BJ (cell line): ENCODE measurements at regions of chr12 and their contacts with region 1.

Region 1: DNA sequence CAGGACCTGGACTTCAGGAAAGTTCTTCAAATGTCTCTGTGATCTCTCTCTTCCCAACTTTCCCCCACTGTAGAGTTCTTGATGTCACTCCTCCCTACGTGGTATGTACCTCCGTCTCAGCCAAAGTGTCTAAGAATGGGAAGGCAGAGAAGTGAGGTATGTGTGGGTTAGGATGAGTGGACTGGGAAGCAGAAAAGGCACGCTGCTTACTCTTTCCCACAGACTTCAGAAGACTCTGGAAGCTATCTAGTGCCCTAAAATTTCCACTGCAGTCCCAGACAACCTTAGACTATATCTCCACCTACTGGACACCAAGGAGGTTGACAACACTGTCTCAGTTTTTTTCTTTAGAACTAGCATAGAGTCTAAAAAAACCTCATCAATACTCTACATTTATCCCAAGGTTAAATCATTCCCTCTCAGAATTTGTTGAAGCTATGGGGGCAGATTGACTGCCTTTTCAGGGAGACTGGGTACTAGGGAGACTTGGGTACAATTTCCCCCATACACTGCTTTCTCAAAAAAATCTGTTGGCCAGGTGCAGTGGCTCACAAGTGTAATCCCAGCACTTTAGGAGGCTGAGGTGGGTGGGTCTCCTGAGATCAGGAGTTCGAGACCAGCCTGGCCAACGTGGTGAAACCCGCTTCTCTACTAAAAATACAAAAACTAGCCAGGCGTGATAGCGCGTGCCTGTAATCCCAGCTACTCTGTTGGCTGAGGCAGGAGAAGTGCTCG is 20.6 kb upstream of the ITGA5 start:
- DNase-seq: peak; percentile 27
- H3K4me3 ChIP-seq: no peak overlapping the region
- H3K27me3 ChIP-seq: peaks cover 4% of the 10 kb centered on the region; the same call in 1 of the 2 replicates
- CTCF ChIP-seq: peak; percentile 79

Region 2: GRCh38 chr12:54385241-54385914 is 54.3 kb before region 1 on chr12:
- CTCF ChIA-PET with region 1: interaction called, 42 read pairs
- POLR2A ChIA-PET with region 1: no interaction called
- DNase-seq: no peak
- H3K4me3 ChIP-seq: no peak overlapping the region
- H3K27me3 ChIP-seq: no peaks in the 10 kb centered on the region
- CTCF ChIP-seq: no peak

Region 3: GRCh38 chr12:54411391-54412241 is 28.1 kb before region 1 on chr12:
- CTCF ChIA-PET with region 1: interaction called, 643 read pairs
- POLR2A ChIA-PET with region 1: interaction called, 3 read pairs
- DNase-seq: peak; percentile 98
- H3K4me3 ChIP-seq: no peak overlapping the region
- H3K27me3 ChIP-seq: no peaks in the 10 kb centered on the region
- CTCF ChIP-seq: no peak

Region 4: DNA sequence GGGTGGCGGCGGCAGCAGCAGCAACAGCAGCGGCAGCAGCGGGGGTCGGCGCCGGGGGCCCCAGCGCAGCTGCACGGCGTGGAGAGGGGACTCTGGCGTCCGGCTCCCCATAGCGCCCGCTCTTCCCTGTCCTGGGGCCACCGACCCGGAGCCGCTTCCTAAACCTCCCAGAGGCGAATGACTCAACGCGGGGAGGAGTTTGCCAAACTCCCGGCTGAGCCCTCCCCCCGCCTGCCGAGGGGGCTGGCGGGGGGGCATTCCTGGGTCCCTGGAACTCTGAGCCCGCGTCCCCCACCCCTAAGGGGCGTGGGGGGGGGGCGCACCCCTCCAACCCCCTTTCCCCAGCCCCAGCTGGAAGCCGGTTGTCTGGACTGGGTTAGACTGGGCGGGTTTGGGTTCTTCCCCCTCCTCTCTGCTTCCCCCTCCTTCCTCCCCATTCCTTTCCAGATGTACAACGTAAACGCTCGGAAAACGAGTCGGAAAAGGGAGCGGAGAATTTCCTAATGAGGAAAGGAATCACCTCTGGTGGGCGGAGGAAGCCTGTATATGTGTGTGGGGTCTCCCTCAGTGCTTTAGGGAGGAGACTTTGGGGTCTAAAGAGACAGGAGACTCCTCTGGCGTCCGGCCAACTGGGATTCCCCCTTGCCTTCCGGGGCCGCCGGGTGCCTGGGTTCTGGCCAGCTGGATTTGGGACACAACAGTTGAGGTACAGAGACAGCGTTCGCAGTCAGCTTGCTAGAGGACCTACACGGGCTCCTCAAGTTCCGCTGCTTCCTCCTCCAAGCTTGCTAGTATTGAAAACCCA is 20.4 kb before region 1 on chr12 and contains the start of gene ITGA5:
- CTCF ChIA-PET with region 1: interaction called, 18 read pairs
- POLR2A ChIA-PET with region 1: no interaction called
- DNase-seq: no peak
- H3K4me3 ChIP-seq: peak within 1 kb of the TSS; percentile 95
- H3K27me3 ChIP-seq: no peaks in the 10 kb centered on the region
- CTCF ChIP-seq: no peak
- polyA plus RNA-seq, gene ITGA5: 170 and 375 TPM in 2 replicates

Region 5: GRCh38 chr12:54588110-54588889 is 148.6 kb after region 1 on chr12 and contains the start of gene PPP1R1A:
- CTCF ChIA-PET with region 1: no interaction called
- POLR2A ChIA-PET with region 1: no interaction called
- DNase-seq: no peak
- H3K4me3 ChIP-seq: no peak within 1 kb of the TSS
- H3K27me3 ChIP-seq: peaks cover 37% of the 10 kb centered on the region
- CTCF ChIP-seq: no peak
- polyA plus RNA-seq, gene PPP1R1A: not detected in 2 replicates